ENCODE measurements at regions of chr4 and their contacts with region 1.

Region 1: GRCh38 chr4:82268050-82268825 is 105.6 kb downstream of the HNRNPD start:
- DNase-seq: peak; percentile 57
- H3K4me3 ChIP-seq: no peak overlapping the region; a peak in 1 of 4 replicates
- H3K27ac ChIP-seq: no peak overlapping the region
- H3K4me1 ChIP-seq: no peaks in the 10 kb centered on the region
- H3K27me3 ChIP-seq: peaks cover 33% of the 10 kb centered on the region; the same call in 1 of the 2 replicates
- CTCF ChIP-seq: peak; percentile 73
- EP300 ChIP-seq: no peak
- RAD21 ChIP-seq: peak; percentile 78

Region 2: DNA sequence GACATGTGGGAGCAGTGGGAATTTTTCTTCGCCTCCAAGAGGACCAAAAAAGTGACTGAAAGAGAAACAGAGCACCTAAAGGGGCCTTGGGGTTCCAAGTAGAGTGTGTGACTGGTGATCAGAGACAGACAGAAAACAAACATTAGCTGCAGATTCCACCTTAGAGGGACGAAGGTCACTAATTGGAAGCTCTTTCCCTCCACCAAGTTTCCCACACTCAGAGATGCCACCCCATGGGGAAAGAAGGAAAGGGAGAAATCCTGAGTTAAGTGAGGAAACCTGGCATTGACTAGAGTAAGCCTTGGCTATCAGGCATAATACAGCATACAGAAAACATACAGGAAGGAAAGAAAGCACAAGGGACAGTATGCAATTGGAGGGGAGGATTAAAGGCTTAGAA is 14.6 kb after region 1 on chr4:
- CTCF ChIA-PET with region 1: interaction called, 21 read pairs
- POLR2A ChIA-PET with region 1: no interaction called
- DNase-seq: no peak
- H3K4me3 ChIP-seq: no peak overlapping the region
- H3K27ac ChIP-seq: no peak overlapping the region
- H3K4me1 ChIP-seq: peaks cover 0 to 5% of the 10 kb centered on the region in 2 experiments; a peak in 1 of 4 replicates
- H3K27me3 ChIP-seq: peaks cover 25% of the 10 kb centered on the region; the same call in 1 of the 2 replicates
- CTCF ChIP-seq: no peak
- EP300 ChIP-seq: no peak
- RAD21 ChIP-seq: no peak

Region 3: GRCh38 chr4:82525395-82525831 is 257.2 kb after region 1 on chr4:
- CTCF ChIA-PET with region 1: no interaction called
- POLR2A ChIA-PET with region 1: no interaction called
- DNase-seq: no peak
- H3K4me3 ChIP-seq: no peak overlapping the region
- H3K27ac ChIP-seq: no peak overlapping the region
- H3K4me1 ChIP-seq: no peaks in the 10 kb centered on the region
- H3K27me3 ChIP-seq: no peaks in the 10 kb centered on the region
- CTCF ChIP-seq: no peak
- EP300 ChIP-seq: no peak
- RAD21 ChIP-seq: no peak

Measured in SK-N-SH (cell line).